HepG2 (cell line): ENCODE measurements at regions of chr21 and their contacts with region 1.

Region 1: DNA sequence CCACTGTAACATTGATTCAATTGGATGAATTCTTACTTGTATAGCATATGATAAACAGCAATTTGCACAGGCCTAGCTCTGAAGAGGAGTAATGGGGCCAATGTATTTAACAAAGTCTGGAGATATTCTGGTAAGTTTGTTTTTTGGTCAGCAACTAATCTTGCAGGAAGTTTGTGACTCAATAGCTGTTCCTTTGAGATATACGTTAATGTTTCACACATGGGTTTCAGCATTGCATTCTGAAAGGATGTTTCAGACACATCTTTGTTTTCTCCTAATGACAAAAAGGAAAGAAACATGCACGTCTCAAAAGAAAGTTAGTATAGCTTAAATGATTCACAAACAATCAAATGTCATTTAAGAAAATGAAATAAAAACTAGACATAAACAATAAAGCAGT is 49.0 kb downstream of the LTN1 start:
- DNase-seq: no peak
- ATAC-seq: no peak
- H3K4me3 ChIP-seq: no peak overlapping the region
- H3K27ac ChIP-seq: no peak overlapping the region
- H3K4me1 ChIP-seq: no peaks in the 10 kb centered on the region
- H3K27me3 ChIP-seq: no peaks in the 10 kb centered on the region
- CTCF ChIP-seq: no peak
- EP300 ChIP-seq: no peak
- POLR2A ChIP-seq: no peak
- RAD21 ChIP-seq: no peak

Region 2: DNA sequence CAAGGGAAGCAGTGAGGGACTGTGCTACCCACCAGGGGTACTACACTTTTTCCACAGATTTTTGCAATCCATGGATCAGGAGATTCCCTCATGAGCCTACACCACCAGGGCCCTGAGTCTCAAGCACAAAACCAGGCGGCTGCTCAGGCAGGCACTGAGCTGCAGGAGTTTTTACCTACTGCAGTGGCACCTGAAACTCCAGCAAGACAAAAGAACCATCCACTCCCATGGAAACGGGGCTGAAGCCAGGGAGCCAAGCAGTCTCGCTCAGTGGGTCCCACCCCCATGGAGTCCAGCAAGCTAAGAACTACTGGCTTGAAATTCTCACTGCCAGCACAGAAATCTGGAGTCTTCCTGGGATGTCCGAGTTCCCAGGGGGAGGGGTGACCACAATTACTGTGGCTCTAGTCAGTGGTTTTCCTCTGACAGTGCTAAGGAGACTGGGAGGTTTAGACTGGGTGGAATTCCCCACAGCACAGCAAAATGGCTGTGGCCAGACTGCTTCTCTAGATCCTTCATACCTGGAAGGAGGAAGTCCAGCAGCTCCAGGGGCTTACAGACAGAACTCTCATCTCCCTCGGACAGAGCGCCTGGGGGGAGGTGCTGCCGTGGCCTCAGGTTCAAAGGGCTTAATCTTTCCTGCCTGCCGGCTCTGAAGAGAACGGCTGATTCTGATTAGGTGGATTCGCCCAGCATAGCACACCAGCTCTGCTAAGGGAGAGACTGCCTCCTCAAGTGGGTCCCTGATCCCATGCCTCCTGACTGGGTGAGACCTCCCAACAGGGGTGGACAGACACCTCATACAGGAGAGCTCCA is 388.8 kb before region 1 on chr21:
- CTCF ChIA-PET with region 1: no interaction called
- POLR2A ChIA-PET with region 1: no interaction called
- in situ Hi-C with region 1: no loop called
- intact Hi-C with region 1: no loop called
- DNase-seq: no peak
- ATAC-seq: peak; percentile 96
- H3K4me3 ChIP-seq: peak overlapping the region in 2 of 3 experiments; percentile 19 to 57; a peak in 3 of 6 replicates
- H3K27ac ChIP-seq: no peak overlapping the region
- H3K4me1 ChIP-seq: peaks cover 18% of the 10 kb centered on the region
- H3K27me3 ChIP-seq: no peaks in the 10 kb centered on the region
- CTCF ChIP-seq: no peak
- EP300 ChIP-seq: no peak
- POLR2A ChIP-seq: no peak
- RAD21 ChIP-seq: no peak

Region 3: DNA sequence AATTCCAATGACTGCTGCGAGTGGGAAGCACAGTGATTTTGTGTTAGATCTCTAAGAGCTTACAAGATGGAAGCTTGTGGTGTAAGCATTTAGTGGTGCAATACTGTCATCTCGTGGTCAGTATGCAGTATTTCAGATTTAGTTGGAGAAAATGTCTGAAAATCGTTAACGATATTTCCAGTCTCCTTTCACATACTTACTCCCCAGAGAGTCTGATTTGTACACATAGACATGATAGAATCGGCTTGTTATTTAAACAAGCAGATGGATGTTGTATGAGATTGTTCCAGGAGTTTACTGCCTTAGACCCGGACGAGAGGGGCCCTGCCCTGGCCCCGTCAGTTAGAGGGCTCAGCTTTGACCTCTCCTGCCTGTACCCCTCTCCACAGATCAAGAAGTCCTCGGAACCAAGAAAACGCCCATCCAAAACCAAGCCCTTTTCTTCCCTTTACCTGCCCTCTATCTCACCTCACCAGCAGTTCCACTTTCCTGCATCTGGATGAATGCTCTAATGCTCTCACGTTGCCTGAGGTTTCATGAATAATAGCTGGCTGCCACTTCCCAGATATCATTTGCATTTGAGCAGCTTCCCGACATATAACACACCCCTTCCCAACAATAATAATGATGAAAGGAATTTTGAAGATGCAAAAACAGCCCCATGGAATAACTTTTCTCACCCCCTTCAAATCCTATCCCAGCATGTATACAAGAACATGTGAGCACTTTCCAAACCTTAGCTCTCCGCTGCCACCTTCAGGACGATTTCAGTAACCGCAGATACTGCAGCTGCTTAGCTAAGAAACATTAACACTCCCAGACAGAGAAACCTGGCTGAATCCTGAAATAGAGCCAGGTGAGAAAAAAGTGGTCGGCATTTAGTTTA is 198.3 kb before region 1 on chr21:
- CTCF ChIA-PET with region 1: interaction called, 10 read pairs
- POLR2A ChIA-PET with region 1: no interaction called
- in situ Hi-C with region 1: no loop called
- intact Hi-C with region 1: loop called (anchors 1 kb)
- DNase-seq: peak; percentile 70
- ATAC-seq: peak; percentile 96
- H3K4me3 ChIP-seq: peak overlapping the region; percentile 25 to 59 (median 52); a peak in 5 of 6 replicates
- H3K27ac ChIP-seq: no peak overlapping the region
- H3K4me1 ChIP-seq: peaks cover 5% of the 10 kb centered on the region; the same call in 1 of the 2 replicates
- H3K27me3 ChIP-seq: no peaks in the 10 kb centered on the region
- CTCF ChIP-seq: peak; percentile 87
- EP300 ChIP-seq: no peak
- POLR2A ChIP-seq: no peak
- RAD21 ChIP-seq: peak; percentile 90